Activated CD4-positive, alpha-beta T cell treated with anti-CD3 and anti-CD28 coated beads, Interleukin-2, amount 10 ng/mL, durations not matched to agents 7 days and 5 days (primary cell): ENCODE measurements at regions of chr22 and their contacts with region 1.

Region 1: DNA sequence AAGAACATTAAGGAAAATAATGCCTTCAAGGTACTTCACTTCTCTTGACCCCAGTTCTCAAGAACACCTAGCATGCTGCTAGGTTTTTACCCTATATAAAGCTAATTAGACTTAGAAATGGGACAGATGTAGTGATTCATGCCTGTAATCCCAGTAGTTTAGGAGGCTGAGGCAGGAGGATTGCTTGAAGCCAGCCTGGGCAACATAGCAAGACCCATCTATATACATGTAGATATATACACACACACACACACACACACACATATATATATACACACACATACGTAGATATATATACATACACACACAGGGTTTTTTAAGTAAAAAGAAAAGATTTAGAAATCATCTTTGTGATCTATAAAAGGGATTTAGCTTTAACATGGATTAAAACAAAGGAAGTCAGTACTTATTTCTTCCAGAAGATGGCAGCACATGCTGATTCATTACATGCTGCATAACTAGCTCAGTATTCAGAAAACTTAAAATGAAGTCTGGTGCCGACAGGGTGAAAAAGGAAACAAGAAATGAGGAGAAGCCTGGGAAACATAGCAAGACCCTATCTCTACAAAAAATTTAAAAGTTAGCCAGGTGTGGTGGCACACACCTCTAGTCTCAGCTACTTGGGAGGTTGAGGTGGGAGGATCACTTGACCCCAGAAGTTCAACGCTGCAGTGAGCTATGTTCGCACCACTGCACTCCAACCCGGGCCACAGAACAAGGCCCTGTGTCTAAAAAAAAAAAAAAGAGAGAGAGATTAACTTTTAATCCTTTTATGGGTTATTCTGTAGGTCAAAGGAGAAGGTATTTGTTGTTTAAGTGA is 28.5 kb upstream of the RBX1 start:
- DNase-seq: peak; percentile 62
- H3K4me3 Mint-ChIP-seq: no peak overlapping the region
- H3K27ac Mint-ChIP-seq: peak overlapping the region; percentile 22
- H3K4me1 Mint-ChIP-seq: peaks cover 4% of the 10 kb centered on the region
- H3K27me3 Mint-ChIP-seq: no peaks in the 10 kb centered on the region

Region 2: GRCh38 chr22:40826984-40827741 is 95.5 kb before region 1 on chr22:
- CTCF ChIA-PET with region 1: no interaction called
- POLR2A ChIA-PET with region 1: no interaction called
- DNase-seq: no peak
- H3K4me3 Mint-ChIP-seq: no peak overlapping the region
- H3K27ac Mint-ChIP-seq: no peak overlapping the region
- H3K4me1 Mint-ChIP-seq: no peaks in the 10 kb centered on the region
- H3K27me3 Mint-ChIP-seq: no peaks in the 10 kb centered on the region

Region 3: GRCh38 chr22:40911772-40912171 is 10.9 kb before region 1 on chr22:
- CTCF ChIA-PET with region 1: interaction called, 19 read pairs
- POLR2A ChIA-PET with region 1: no interaction called
- DNase-seq: no peak
- H3K4me3 Mint-ChIP-seq: no peak overlapping the region
- H3K27ac Mint-ChIP-seq: no peak overlapping the region
- H3K4me1 Mint-ChIP-seq: no peaks in the 10 kb centered on the region
- H3K27me3 Mint-ChIP-seq: no peaks in the 10 kb centered on the region